ENCODE measurements at regions of chr4 and their contacts with region 1.

Region 1: GRCh38 chr4:184722798-184723197 is 11.1 kb downstream of the CENPU start:
- DNase-seq: peak; percentile 48
- H3K4me3 ChIP-seq: no peak overlapping the region
- H3K27ac ChIP-seq: peak overlapping the region in 3 of 4 donors; percentile 6 to 26 (median 24)
- H3K4me1 ChIP-seq: peaks cover 0 to 10% (median 4%) of the 10 kb centered on the region in 4 donors
- H3K27me3 ChIP-seq: no peaks in the 10 kb centered on the region
- CTCF ChIP-seq: peak in 4 of 5 experiments; percentile 33 to 53 (median 40)
- EP300 ChIP-seq: no peak
- POLR2A ChIP-seq: no peak

Region 2: DNA sequence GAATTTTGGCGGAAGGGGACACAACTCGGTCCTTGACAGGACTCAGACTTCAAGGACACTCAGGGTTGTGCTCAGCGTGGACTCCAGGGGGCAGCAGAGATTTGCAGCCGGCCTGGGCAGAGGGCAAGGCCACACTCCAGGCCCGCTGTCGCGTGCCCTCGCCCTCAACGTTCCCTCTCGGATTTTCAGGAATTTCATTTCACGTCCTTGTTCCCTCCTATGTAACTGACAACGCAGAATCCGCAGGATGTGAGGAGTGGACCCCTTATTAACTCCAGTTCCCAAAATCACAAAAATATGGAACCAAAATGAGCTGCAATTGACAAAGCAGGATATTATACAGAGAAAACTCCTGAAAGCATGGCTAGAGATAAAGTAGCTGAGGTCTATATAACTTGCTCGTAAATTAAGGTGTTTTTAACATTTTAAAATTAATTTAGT is 1784.6 kb before region 1 on chr4:
- in situ Hi-C with region 1: no loop called
- intact Hi-C with region 1: no loop called
- DNase-seq: peak; percentile 78
- H3K4me3 ChIP-seq: no peak overlapping the region
- H3K27ac ChIP-seq: no peak overlapping the region
- H3K4me1 ChIP-seq: peaks cover 0 to 3% (median 0%) of the 10 kb centered on the region in 4 donors
- H3K27me3 ChIP-seq: peaks cover 5% of the 10 kb centered on the region
- CTCF ChIP-seq: peak; percentile 81 to 93 (median 86)
- EP300 ChIP-seq: no peak
- POLR2A ChIP-seq: no peak

Region 3: DNA sequence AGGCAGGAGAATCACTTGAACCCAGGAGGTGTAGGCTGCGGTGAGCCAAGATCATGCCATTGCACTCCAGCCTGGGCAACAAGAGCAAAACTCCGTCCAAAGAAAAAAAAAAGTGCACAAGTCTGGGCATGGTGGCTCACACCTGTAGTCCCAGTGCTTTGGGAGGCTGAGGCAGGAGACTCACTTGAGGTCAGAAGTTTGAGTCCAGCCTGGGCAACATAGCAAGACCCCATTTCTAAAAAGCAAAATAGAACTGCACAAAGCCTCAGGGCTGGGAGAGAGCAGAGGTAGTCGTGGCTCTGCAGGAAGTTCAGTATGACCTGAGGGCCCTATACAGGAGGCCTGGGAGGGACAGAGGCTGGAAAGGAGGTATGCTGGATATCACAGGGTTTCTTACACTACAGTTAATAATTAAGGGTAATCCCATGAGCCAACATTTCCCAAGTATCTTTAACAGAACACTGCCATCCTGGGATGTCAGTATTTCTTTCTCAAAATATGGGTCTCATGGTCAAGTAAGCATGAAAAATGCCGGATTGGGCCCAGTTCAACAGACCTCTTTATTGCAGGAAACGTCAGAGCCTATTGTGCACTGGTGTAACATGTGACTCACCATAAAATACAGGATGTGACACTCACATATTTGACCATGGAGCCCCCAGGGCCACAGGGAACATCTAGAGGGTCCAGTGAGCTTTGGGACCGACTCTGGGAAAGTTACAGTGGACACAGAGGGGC is 65.1 kb after region 1 on chr4:
- in situ Hi-C with region 1: no loop called
- intact Hi-C with region 1: loop called (anchors 2 kb)
- DNase-seq: no peak
- H3K4me3 ChIP-seq: no peak overlapping the region
- H3K27ac ChIP-seq: no peak overlapping the region
- H3K4me1 ChIP-seq: no peaks in the 10 kb centered on the region
- H3K27me3 ChIP-seq: no peaks in the 10 kb centered on the region
- CTCF ChIP-seq: no peak
- EP300 ChIP-seq: no peak
- POLR2A ChIP-seq: no peak